ENCODE measurements at regions of chr13 and their contacts with region 1.

Region 1: GRCh38 chr13:108508263-108508662 is 121.1 kb upstream of the MYO16 start:
- DNase-seq: no peak
- H3K4me3 ChIP-seq: no peak overlapping the region
- CTCF ChIP-seq: no peak
- POLR2A ChIP-seq: no peak

Region 2: GRCh38 chr13:109205315-109205714 is 697.1 kb after region 1 on chr13:
- intact Hi-C with region 1: loop called (anchors 5 kb)
- DNase-seq: no peak
- H3K4me3 ChIP-seq: no peak overlapping the region
- CTCF ChIP-seq: no peak
- POLR2A ChIP-seq: no peak